Cardiac septum (tissue), 1 donor: ENCODE measurements at regions of chr22 and their contacts with region 1.

Region 1: GRCh38 chr22:32852395-32853251 is 51.1 kb downstream of the TIMP3 start:
- DNase-seq: no peak

Region 2: GRCh38 chr22:32803020-32803754 is 49.4 kb before region 1 on chr22:
- intact Hi-C with region 1: loop called (anchors 2 kb)
- DNase-seq: no peak

Region 3: GRCh38 chr22:32818146-32819115 is 34.2 kb before region 1 on chr22:
- intact Hi-C with region 1: no loop called
- DNase-seq: no peak

Region 4: DNA sequence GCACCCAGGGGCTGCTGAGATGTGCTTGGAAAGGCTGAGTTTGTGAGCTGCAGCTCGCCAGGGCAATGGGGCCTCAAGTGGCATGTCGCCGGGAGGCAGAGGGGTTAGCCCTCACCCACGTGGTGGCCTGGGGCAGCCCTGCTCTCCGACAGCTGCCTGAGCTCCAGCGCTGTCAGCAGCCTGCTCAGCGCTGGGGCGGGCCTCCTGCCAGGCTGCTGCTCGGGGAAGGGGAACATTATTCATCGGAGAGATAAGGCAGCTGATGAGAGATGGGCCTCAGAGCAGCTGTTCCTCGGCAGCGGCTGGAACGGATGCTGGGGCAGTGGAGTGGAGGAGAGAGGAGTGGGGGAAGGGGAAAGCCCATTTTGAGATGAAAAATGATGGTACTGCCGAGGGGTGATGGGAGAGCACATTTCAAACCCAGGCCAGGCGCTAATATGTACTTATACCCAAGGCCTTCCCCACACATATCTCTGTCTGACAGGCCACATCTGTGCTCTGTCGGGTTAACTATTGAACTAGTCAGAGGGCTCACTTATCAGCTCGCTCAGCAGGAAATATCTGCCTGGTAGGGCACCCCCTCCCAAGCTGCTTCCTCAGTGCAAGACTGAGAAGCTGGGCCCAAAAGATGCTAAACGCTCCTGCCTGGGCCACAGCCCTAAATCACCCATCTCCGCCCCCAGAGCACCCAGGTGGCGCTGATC is 28.4 kb after region 1 on chr22:
- intact Hi-C with region 1: loop called (anchors 2 kb)
- DNase-seq: peak; percentile 88